CD8-positive, alpha-beta T cell (primary cell): ENCODE measurements at regions of chr2 and their contacts with region 1.

Region 1: DNA sequence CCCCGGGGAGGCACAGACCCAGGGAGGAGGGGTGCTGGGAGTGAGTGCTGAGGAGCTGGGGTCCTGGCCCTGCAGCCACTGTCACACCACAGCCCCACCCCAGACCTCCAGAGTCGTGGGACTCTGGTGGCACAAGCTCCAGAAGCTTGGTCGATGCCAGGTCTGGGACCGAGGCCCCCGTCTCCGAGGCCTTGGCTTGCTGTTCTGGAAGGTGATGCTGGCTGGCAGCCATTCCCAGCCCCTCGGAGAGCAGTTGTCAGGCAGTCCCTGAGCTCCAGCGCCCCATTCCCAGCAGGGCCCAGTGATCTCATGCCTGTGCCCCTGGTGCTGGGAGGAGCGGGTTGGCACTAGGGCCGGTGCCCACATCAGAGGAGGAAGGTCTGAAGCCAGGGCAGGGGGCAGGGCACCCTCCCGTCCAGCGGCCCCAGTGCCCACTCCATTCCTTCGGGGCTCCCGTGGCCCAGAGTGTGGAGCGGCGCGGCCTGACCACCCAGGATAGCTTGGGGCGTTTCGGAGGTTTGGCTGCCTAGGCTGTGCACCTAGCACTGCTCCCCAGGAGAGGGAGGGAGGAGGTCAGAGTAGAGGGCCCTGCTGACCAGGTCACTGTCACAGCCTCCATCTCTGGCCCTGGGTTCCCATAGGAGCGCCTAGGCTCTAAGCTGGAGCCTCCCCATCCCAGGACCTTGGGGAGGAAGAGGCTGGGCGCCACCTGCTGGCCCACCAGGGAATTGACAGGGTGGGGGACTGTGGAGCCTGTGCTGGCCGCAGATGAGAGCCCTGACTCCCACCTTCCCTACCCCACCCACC is 16.8 kb upstream of the ALPI start:
- DNase-seq: peak in 6 of 9 experiments; percentile 22 to 62 (median 47)
- ATAC-seq: peak; percentile 45
- H3K4me3 ChIP-seq: no peak overlapping the region
- H3K4me3 Mint-ChIP-seq: no peak overlapping the region
- H3K27ac ChIP-seq: no peak overlapping the region
- H3K27ac Mint-ChIP-seq: no peak overlapping the region
- H3K4me1 ChIP-seq: no peaks in the 10 kb centered on the region
- H3K4me1 Mint-ChIP-seq: peaks cover 5% of the 10 kb centered on the region
- H3K27me3 ChIP-seq: no peaks in the 10 kb centered on the region
- H3K27me3 Mint-ChIP-seq: no peaks in the 10 kb centered on the region
- CTCF ChIP-seq: no peak

Region 2: DNA sequence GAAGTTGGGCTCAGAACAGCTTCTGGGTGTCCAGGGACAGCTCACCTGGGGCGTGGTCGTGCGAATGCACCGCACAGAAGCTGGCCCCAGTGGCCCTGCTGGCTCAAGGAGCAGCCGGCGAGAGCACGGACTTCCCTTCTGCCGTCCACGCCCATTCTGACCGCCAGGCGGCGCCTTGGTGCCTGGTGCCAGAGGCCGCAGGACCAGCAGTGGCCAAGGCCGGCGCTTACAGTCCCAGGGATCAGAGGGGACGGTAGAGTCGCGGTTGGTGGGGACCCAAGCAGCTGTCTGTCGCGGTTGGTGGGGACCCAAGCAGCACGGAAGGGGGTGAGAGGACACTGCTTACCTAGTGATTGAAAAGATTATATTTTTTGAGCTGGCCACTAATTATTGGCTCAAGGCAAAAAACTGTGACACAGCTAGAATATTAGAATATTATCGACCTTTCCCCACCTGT is 538.6 kb before region 1 on chr2:
- CTCF ChIA-PET with region 1: interaction called, 23 read pairs
- POLR2A ChIA-PET with region 1: no interaction called
- intact Hi-C with region 1: no loop called
- DNase-seq: peak; percentile 19 to 60 (median 41)
- ATAC-seq: peak; percentile 26
- H3K4me3 ChIP-seq: no peak overlapping the region
- H3K4me3 Mint-ChIP-seq: no peak overlapping the region
- H3K27ac ChIP-seq: no peak overlapping the region
- H3K27ac Mint-ChIP-seq: no peak overlapping the region
- H3K4me1 ChIP-seq: no peaks in the 10 kb centered on the region
- H3K4me1 Mint-ChIP-seq: no peaks in the 10 kb centered on the region
- H3K27me3 ChIP-seq: no peaks in the 10 kb centered on the region
- H3K27me3 Mint-ChIP-seq: no peaks in the 10 kb centered on the region
- CTCF ChIP-seq: peak; percentile 75

Region 3: DNA sequence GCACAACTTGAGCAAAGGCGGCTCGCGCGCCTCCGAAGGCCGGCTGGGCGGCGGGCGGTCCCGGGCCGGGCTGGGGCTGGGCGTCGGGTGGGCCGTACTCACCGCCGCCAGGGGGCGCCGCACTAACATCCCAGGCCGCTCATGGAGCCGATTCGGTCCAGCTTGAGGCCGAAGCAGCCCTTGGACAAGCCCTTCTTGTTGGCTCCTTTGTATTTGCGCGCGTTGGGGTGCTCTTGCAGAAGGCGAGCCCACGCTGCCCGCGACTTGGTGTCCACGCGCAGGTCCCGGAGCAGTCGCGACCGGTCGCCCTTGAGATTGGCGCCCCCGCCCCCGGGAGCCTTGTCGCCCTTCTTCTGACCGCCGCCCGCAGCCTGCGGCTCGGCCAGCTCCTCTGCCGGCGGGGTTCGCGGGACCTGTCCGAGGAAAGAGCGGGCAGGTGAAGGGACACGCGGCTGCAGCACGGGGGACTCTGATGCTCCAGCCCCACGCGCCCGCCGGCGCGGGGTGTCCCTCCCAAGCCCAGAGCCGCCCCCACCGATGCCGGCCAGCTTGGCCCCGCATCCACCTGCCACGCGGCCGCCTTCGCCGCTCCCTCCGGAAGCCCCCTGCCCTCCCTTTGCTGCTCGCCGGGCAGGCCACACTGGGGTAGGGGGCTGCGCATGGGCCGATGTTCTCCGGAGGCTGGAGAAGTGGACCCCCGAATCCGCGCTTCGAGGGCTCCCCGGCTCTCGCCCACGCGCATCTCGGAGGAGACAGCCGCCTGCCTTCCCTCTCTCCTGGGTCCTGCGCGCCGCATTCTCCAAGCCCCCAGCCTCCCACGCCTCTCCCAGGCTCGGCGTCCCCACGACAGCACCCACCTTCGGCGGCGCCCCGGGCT is 513.6 kb before region 1 on chr2:
- CTCF ChIA-PET with region 1: interaction called, 6 read pairs
- POLR2A ChIA-PET with region 1: no interaction called
- intact Hi-C with region 1: loop called (anchors 1 kb)
- DNase-seq: peak; percentile 46 to 85 (median 68)
- ATAC-seq: peak; percentile 62
- H3K4me3 ChIP-seq: peak overlapping the region; percentile 35 to 66
- H3K4me3 Mint-ChIP-seq: peak overlapping the region; percentile 76
- H3K27ac ChIP-seq: no peak overlapping the region
- H3K27ac Mint-ChIP-seq: no peak overlapping the region
- H3K4me1 ChIP-seq: peaks cover 16% of the 10 kb centered on the region
- H3K4me1 Mint-ChIP-seq: peaks cover 11% of the 10 kb centered on the region
- H3K27me3 ChIP-seq: peaks cover 7 to 11% of the 10 kb centered on the region in 2 experiments
- H3K27me3 Mint-ChIP-seq: peaks cover 33% of the 10 kb centered on the region
- CTCF ChIP-seq: peak; percentile 73

Region 4: GRCh38 chr2:232075080-232075479 is 364.1 kb before region 1 on chr2:
- CTCF ChIA-PET with region 1: no interaction called
- POLR2A ChIA-PET with region 1: no interaction called
- intact Hi-C with region 1: no loop called
- DNase-seq: no peak
- ATAC-seq: no peak
- H3K4me3 ChIP-seq: no peak overlapping the region
- H3K4me3 Mint-ChIP-seq: no peak overlapping the region
- H3K27ac ChIP-seq: no peak overlapping the region
- H3K27ac Mint-ChIP-seq: no peak overlapping the region
- H3K4me1 ChIP-seq: peaks cover 11% of the 10 kb centered on the region
- H3K4me1 Mint-ChIP-seq: peaks cover 44% of the 10 kb centered on the region
- H3K27me3 ChIP-seq: no peaks in the 10 kb centered on the region
- H3K27me3 Mint-ChIP-seq: no peaks in the 10 kb centered on the region
- CTCF ChIP-seq: no peak

Region 5: DNA sequence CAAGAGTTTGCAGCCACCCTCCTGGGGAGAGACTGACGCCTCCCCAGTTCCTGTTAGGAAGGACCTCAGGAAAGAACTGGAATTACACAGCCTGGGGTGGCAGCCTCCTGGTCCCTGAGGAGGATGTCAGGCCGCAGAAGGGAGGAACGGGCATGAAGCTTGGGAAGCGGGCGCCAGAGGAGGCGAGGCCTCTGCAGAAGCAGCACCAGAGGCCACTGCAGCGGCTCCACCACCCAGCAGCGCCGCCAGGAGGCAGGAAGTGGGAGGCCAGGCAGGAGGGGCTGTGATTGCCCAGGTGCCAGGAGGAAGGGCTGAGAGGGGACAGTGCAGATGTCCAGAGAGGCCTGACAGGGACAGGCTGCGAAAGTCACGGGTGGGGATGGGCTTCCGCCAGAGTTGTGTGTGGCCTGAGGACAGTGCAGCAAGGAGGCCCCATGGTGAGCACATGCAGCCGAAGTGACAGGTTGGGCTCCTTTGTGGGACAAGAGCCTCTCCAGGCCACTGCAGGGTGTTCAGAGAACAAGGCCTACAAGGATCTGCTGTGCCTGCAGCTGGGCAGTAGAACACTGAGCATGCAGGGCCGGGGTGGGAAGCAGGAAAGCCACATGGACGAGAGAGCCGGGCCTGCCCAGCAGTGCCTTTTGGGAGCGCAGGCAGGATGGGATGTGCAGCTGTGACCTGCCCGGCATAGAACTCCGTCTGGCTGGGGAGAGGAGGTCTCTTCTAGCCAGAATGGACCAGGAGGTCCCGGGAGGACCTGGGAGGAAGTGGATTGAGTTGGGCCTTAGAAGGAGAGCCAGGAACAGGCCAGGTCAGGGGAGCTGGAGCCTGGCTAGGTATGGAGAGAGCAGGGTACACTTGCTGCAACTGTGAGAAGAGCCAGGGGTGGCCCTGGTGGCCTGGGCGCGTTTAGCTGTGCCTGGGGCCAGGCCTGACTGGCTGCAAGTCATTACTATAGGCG is 99.8 kb before region 1 on chr2:
- CTCF ChIA-PET with region 1: interaction called, 6 read pairs
- POLR2A ChIA-PET with region 1: no interaction called
- intact Hi-C with region 1: loop called in 1 of 2 experiments (anchors 5 kb)
- DNase-seq: no peak
- ATAC-seq: no peak
- H3K4me3 ChIP-seq: no peak overlapping the region
- H3K4me3 Mint-ChIP-seq: no peak overlapping the region
- H3K27ac ChIP-seq: no peak overlapping the region
- H3K27ac Mint-ChIP-seq: peak overlapping the region; percentile 55
- H3K4me1 ChIP-seq: peaks cover 5% of the 10 kb centered on the region
- H3K4me1 Mint-ChIP-seq: peaks cover 9% of the 10 kb centered on the region
- H3K27me3 ChIP-seq: no peaks in the 10 kb centered on the region
- H3K27me3 Mint-ChIP-seq: no peaks in the 10 kb centered on the region
- CTCF ChIP-seq: no peak

Region 6: DNA sequence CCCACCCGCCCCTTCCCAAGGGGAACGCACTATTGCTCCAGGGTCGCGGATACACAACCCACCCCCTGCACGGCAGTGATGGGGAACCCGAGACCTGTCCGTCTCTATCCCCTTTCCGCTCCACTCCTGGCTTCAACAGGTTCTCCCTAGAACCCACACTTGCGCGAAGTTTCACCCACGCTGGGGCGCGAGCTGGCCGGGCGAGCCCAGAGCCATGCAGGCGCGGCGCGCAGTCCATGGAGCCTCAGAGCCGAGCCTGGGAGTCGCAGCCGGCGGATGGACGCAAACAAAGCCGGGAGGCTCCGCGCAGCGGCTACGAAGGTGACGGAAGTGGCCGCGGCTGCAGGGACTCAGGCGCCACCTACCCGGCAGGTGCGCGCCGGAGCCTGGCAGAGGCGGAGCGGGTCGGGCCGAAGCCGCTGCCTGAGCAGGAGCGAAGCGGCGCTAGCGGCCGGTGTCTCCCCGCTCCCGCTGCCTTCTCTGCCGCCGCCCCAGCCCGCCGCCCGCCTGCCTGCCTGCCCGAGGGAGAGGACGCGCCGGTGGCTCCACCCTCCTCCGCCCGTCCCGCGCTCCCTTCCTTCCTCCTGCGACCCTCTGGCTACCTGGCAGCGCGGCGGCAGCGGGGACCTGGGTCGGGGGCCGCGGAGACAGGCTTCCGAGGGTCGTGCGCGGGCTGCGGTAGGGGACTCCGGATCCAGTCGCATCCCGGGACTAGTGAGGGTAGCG is 18.5 kb before region 1 on chr2:
- CTCF ChIA-PET with region 1: interaction called, 13 read pairs
- POLR2A ChIA-PET with region 1: no interaction called
- intact Hi-C with region 1: no loop called
- DNase-seq: peak in 6 of 9 experiments; percentile 4 to 58 (median 31)
- ATAC-seq: peak; percentile 54
- H3K4me3 ChIP-seq: peak overlapping the region; percentile 8 to 49
- H3K4me3 Mint-ChIP-seq: peak overlapping the region; percentile 51
- H3K27ac ChIP-seq: no peak overlapping the region
- H3K27ac Mint-ChIP-seq: no peak overlapping the region
- H3K4me1 ChIP-seq: peaks cover 7% of the 10 kb centered on the region
- H3K4me1 Mint-ChIP-seq: peaks cover 14% of the 10 kb centered on the region
- H3K27me3 ChIP-seq: peaks cover 0 to 10% of the 10 kb centered on the region in 2 experiments
- H3K27me3 Mint-ChIP-seq: peaks cover 30% of the 10 kb centered on the region
- CTCF ChIP-seq: no peak

Region 7: GRCh38 chr2:232502911-232503808 is 64.0 kb after region 1 on chr2:
- CTCF ChIA-PET with region 1: no interaction called
- POLR2A ChIA-PET with region 1: no interaction called
- intact Hi-C with region 1: no loop called
- DNase-seq: peak in 6 of 9 experiments; percentile 14 to 78 (median 68)
- ATAC-seq: peak; percentile 67
- H3K4me3 ChIP-seq: peak overlapping the region in 1 of 2 experiments; percentile 30
- H3K4me3 Mint-ChIP-seq: peak overlapping the region; percentile 58
- H3K27ac ChIP-seq: no peak overlapping the region
- H3K27ac Mint-ChIP-seq: peak overlapping the region; percentile 55
- H3K4me1 ChIP-seq: peaks cover 4% of the 10 kb centered on the region
- H3K4me1 Mint-ChIP-seq: peaks cover 8% of the 10 kb centered on the region
- H3K27me3 ChIP-seq: peaks cover 6 to 7% of the 10 kb centered on the region in 2 experiments
- H3K27me3 Mint-ChIP-seq: peaks cover 40% of the 10 kb centered on the region
- CTCF ChIP-seq: no peak